Motor neuron (in vitro differentiated cells): ENCODE measurements at regions of chr5 and their contacts with region 1.

Region 1: GRCh38 chr5:151447174-151448037 is at the start of gene SLC36A1:
- ATAC-seq: peak; percentile 82 to 98 (median 94)
- H3K4me3 ChIP-seq: peak within 1 kb of the TSS; percentile 56 to 65 (median 60)
- H3K27ac ChIP-seq: peak within 1 kb of the TSS in 1 of 2 donors; percentile 2
- H3K4me1 ChIP-seq: peaks cover 8 to 13% of the 10 kb centered on the region in 2 donors
- total RNA-seq, gene SLC36A1: 2.2 to 11.8 (median 6.2) TPM

Region 2: GRCh38 chr5:151628112-151628823 is 180.9 kb after region 1 on chr5:
- in situ Hi-C with region 1: loop called in 1 of 9 experiments (anchors 25 kb)
- ATAC-seq: peak in 2 of 8 experiments; percentile 25 to 50
- H3K4me3 ChIP-seq: no peak overlapping the region
- H3K27ac ChIP-seq: no peak overlapping the region
- H3K4me1 ChIP-seq: no peaks in the 10 kb centered on the region